Sigmoid colon (tissue), 7 donors: ENCODE measurements at regions of chr6 and their contacts with region 1.

Region 1: DNA sequence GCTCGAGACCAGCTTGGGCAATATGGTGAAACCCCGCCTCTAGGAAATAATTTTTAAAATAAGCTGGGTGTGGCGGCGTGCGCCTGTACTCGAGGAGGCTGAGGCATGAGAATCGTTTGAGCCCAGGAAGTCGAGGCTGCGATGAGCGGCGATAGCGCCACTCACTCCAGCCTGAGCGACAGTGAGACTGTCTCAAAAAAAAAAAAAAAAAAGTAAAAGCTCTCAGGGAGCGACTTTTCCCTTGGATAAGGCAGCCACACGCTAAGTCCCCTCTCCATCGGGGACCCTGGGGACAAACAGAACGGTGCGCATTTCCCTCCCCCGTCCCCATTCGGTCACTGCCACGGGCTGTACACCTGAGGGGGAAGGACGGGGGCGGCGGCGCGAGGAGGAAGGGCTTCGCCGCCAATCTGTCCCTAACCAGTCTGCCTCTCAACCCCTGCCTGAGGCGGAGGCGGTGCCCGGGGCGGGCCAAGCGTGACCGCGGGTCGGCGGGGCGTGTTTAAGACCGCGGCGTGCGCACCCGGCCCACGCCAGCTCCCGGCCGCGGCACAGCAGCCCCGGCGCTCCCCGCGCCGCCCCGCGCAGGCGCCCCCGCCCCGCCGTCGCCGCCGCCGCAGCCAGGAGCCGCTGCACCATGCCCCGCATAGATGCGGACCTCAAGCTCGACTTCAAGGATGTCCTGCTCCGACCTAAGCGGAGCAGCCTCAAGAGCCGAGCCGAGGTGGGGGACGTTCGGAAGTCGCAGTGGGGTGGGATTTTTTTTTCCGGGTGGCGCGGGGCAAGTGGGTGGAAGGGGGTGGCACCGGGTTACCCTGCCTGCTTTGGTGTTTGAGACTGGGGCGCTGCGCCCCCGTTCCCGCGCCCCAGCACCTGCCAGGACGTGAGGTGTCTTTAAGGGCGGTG is at the start of gene GMPR:
- DNase-seq: peak; percentile 90
- H3K4me3 ChIP-seq: peak within 1 kb of the TSS; percentile 56 to 76 (median 63)
- H3K27ac ChIP-seq: peak within 1 kb of the TSS; percentile 81 to 87 (median 82)
- H3K4me1 ChIP-seq: peaks cover 0 to 59% (median 39%) of the 10 kb centered on the region in 4 donors
- H3K27me3 ChIP-seq: no peaks in the 10 kb centered on the region
- CTCF ChIP-seq: no peak
- EP300 ChIP-seq: no peak
- POLR2A ChIP-seq: peak in 1 of 2 donors; percentile 13
- total RNA-seq, gene GMPR: 15.0 to 26.5 (median 18.4) TPM

Region 2: GRCh38 chr6:15796130-15796771 is 442.1 kb before region 1 on chr6:
- intact Hi-C with region 1: no loop called
- DNase-seq: no peak
- H3K4me3 ChIP-seq: no peak overlapping the region
- H3K27ac ChIP-seq: no peak overlapping the region
- H3K4me1 ChIP-seq: no peaks in the 10 kb centered on the region
- H3K27me3 ChIP-seq: no peaks in the 10 kb centered on the region
- CTCF ChIP-seq: no peak
- EP300 ChIP-seq: no peak
- POLR2A ChIP-seq: no peak

Region 3: GRCh38 chr6:16108921-16109658 is 129.2 kb before region 1 on chr6:
- intact Hi-C with region 1: no loop called
- DNase-seq: no peak
- H3K4me3 ChIP-seq: no peak overlapping the region
- H3K27ac ChIP-seq: peak overlapping the region in 2 of 4 donors; percentile 33 to 45
- H3K4me1 ChIP-seq: peaks cover 0 to 21% (median 14%) of the 10 kb centered on the region in 4 donors
- H3K27me3 ChIP-seq: no peaks in the 10 kb centered on the region
- CTCF ChIP-seq: no peak
- EP300 ChIP-seq: no peak
- POLR2A ChIP-seq: no peak

Region 4: GRCh38 chr6:16277101-16277981 is 39.0 kb after region 1 on chr6:
- intact Hi-C with region 1: loop called (anchors 5 kb)
- DNase-seq: peak; percentile 72
- H3K4me3 ChIP-seq: no peak overlapping the region
- H3K27ac ChIP-seq: peak overlapping the region in 3 of 4 donors; percentile 27 to 48 (median 28)
- H3K4me1 ChIP-seq: peaks cover 0 to 30% (median 28%) of the 10 kb centered on the region in 4 donors
- H3K27me3 ChIP-seq: no peaks in the 10 kb centered on the region
- CTCF ChIP-seq: peak in 1 of 4 experiments; percentile 32
- EP300 ChIP-seq: no peak
- POLR2A ChIP-seq: no peak

Region 5: DNA sequence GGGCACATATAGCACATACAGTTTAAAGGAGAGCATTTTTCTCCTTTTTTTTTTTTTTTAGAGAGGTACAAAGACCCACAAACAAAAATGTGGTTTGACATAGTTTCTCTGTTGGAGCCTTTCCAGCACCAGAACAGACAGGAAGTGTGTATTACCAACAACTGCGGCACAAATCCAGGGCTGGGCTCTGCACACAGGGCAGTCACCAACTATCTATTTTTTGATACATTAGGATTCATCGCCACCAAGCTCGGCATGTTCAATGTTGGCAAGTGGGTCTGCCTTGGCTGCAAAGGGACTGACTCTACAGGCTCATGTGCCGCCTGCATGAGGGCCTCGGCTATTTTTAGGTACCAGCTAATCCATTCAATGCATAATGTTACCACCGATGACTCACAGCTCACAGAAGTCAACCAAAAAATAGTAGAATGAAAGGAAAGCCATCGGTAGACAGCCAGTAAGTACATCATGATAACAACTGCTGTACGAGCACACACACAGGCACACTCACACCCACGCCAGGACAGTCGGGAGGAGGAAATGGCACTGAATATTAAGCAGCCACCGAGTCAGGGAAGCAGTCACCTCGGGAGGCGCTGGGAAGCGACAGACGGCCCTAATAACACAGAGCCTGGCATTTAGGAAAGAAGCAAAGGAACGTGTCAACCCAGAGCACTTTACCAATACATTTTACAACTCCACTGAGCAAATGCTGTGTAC is 81.7 kb after region 1 on chr6:
- intact Hi-C with region 1: loop called (anchors 10 kb)
- DNase-seq: peak; percentile 80
- H3K4me3 ChIP-seq: peak overlapping the region in 2 of 4 donors; percentile 17 to 19
- H3K27ac ChIP-seq: peak overlapping the region; percentile 68 to 91 (median 84)
- H3K4me1 ChIP-seq: peaks cover 0 to 65% (median 58%) of the 10 kb centered on the region in 4 donors
- H3K27me3 ChIP-seq: no peaks in the 10 kb centered on the region
- CTCF ChIP-seq: no peak
- EP300 ChIP-seq: peak in 1 of 4 donors; percentile 34
- POLR2A ChIP-seq: no peak

Region 6: DNA sequence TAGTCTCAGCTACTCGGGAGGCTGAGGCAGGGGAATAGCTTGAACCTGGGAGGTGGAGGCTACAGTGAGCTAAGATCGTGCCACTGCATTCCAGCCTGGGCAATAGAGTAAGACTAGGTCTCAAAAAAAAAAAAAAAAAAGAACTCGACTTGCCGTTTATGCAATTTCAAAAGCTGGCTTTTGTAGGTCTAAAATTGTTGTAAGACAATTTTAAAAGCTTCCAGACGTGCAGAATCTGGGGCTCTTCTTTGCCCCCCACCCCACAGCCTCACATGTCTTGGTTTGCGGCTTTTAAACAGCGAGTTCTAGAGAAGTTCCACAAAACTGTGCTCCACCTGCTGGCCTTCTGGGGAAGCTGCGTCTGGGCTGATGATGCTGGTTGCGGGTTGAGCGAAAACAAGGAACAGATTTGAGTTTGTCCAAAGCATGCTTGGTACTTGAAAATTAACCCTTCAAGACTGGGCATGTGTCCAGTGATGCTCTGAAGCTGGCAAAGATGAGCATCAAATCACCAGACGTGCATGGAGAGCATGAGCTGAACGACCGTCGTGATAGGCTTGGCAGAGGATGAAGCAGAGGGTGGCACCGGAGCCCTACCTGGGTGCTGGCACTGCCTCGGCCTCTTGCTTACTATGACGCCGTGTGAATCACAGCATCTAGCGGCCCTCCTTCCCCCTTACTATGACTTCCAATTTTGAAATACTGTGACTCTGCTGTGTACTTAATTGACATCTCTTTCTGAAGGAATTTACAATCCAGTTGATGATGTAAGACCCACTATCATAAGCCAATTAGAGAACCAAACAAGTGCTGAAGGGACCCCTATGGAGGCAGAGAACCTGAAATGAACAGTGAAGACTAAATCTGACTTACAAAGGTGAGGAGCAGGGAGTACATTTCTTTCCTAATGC is 171.5 kb after region 1 on chr6:
- intact Hi-C with region 1: loop called (anchors 5 kb)
- DNase-seq: peak; percentile 74
- H3K4me3 ChIP-seq: no peak overlapping the region
- H3K27ac ChIP-seq: peak overlapping the region in 2 of 4 donors; percentile 1 to 5
- H3K4me1 ChIP-seq: peaks cover 0 to 53% (median 32%) of the 10 kb centered on the region in 4 donors
- H3K27me3 ChIP-seq: no peaks in the 10 kb centered on the region
- CTCF ChIP-seq: peak; percentile 52 to 88 (median 70)
- EP300 ChIP-seq: no peak
- POLR2A ChIP-seq: no peak